ENCODE measurements at regions of chr19 and their contacts with region 1.

Region 1: DNA sequence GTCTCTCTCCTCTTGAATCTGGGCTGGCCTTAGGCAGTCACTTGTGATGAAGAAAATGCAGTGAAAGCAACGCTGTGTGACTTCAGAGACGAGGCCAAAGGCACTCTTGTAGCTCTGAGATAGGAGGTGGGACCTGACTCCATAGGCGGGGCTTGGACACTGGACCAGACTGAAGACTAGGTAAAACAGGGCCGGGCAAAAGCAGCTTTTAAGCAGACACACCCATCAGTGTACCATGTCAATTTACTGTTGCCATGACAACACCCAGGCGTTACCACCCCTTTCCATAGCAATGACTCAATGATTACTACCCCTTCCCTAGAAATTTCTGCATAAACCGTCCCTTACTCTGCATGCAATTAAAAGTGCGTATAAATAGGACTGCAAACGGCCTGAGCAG is 6.6 kb upstream of the EID2 start:
- DNase-seq: peak; percentile 14
- ATAC-seq: no peak
- H3K4me3 ChIP-seq: no peak overlapping the region
- H3K27ac ChIP-seq: no peak overlapping the region
- H3K4me1 ChIP-seq: no peaks in the 10 kb centered on the region
- H3K27me3 ChIP-seq: no peaks in the 10 kb centered on the region
- CTCF ChIP-seq: no peak

Region 2: GRCh38 chr19:39631178-39631577 is 84.6 kb after region 1 on chr19:
- CTCF ChIA-PET with region 1: no interaction called
- POLR2A ChIA-PET with region 1: no interaction called
- intact Hi-C with region 1: loop called (anchors 1 kb)
- DNase-seq: no peak
- ATAC-seq: no peak
- H3K4me3 ChIP-seq: no peak overlapping the region
- H3K27ac ChIP-seq: no peak overlapping the region
- H3K4me1 ChIP-seq: no peaks in the 10 kb centered on the region
- H3K27me3 ChIP-seq: peaks cover 11% of the 10 kb centered on the region
- CTCF ChIP-seq: no peak

Region 3: DNA sequence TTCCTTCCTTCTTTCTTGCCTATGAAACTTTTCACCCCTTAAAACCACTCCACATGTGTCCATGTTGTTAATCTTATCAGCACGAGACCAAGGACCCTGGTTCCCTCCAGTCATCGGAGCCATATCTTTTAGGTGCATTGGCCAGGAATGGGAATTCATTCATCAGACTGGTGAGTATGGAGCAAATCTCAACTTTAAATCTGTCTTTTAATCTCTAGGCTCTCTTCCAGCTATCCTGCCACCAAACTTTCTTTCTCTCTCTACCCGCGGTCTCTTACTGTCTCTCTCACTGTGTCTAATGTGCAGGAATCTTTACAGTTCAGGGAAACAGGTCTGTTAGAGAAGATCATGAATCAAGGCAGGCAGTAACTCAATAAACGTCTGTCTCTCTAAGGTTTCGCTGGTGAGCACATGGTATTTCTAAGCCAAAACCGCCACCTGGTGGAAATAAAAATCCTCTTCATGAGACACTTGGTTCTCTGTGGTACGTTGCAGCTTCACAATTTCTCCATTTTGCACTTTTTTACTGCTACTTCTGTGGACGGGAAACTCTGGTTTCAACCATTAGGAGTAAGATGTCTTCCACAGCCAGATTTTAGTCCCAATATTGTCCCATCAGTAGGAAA is 125.3 kb after region 1 on chr19:
- CTCF ChIA-PET with region 1: no interaction called
- POLR2A ChIA-PET with region 1: no interaction called
- intact Hi-C with region 1: loop called (anchors 1 kb)
- DNase-seq: peak; percentile 70
- ATAC-seq: peak; percentile 53
- H3K4me3 ChIP-seq: no peak overlapping the region
- H3K27ac ChIP-seq: no peak overlapping the region
- H3K4me1 ChIP-seq: peaks cover 3% of the 10 kb centered on the region; the same call in 1 of the 2 replicates
- H3K27me3 ChIP-seq: no peaks in the 10 kb centered on the region
- CTCF ChIP-seq: peak; percentile 70